Activated CD4-positive, alpha-beta memory T cell treated with anti-CD3 and anti-CD28 coated beads, Interleukin-2, amount 10 ng/mL, durations not matched to agents 7 days and 5 days (primary cell): ENCODE measurements at regions of chr15 and their contacts with region 1.

Region 1: DNA sequence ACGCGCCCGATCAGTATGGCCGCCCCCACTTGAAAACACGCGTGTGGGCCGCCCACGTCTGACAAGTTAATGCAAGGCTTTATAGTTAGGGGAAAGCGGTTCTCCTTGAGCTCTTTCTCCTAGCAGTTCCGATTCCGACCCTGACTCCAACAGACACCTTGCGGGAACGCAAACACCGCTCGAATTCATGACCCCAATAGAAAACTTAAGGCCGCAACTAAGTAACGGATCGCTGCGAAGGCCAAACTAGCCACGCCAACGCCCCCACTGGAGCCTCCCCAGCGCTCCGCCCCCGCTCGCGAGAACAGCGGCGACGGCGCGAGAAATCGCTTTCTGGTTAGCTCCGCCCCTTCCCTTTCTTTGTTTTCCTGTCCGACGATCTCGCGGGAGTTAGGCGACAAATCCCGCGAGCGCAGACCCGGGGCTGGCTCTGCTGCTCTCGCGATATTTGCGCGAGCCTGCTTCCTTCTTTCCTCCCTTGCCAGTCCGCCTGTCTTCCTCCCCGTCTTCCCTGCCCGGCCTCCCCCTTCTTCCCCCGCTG is at the start of gene IREB2:
- DNase-seq: peak; percentile 98
- H3K4me3 Mint-ChIP-seq: peak within 1 kb of the TSS; percentile 92
- H3K27ac Mint-ChIP-seq: peak within 1 kb of the TSS; percentile 89
- H3K4me1 Mint-ChIP-seq: peaks cover 48% of the 10 kb centered on the region
- H3K27me3 Mint-ChIP-seq: peaks cover under 1% of the 10 kb centered on the region
- total RNA-seq, gene IREB2: 57.8 to 61.5 TPM

Region 2: DNA sequence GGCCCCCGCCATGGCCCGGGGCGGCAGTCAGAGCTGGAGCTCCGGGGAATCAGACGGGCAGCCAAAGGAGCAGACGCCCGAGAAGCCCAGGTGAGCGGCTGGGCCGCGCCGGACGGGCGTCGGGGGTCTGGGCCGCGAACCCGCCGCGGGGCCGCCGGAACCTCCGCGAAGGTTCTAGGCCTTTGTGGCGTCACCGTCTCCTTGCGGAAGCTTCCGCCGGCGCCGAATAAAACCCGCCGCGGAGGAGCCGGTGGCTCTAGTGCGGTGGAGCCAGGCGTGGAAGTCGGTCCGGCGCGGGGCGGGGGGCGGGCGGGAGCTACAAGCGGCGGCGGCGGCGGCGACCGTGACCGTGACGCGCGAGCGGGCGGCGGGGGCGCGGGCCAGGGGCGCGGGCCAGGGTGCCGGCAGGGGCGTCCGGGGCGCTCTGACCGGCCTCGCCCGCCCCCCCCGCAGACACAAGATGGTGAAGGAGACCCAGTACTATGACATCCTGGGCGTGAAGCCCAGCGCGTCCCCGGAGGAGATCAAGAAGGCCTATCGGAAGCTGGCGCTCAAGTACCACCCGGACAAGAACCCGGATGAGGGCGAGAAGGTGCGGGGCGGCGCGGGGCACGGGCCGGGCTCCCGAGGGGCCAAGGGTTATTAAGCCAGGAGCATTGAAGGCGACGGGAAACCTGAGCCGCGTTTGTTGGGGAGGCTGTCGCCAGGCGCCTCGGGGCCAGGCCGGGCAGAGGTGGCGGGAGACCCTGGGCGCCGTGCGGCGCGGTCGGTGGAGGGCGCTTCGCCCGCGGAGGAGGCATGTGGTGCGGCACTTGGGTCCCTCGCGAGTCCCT is 173.3 kb before region 1 on chr15 and contains the start of gene DNAJA4:
- CTCF ChIA-PET with region 1: no interaction called
- POLR2A ChIA-PET with region 1: interaction called, 37 read pairs
- DNase-seq: peak; percentile 68
- H3K4me3 Mint-ChIP-seq: peak within 1 kb of the TSS; percentile 83
- H3K27ac Mint-ChIP-seq: peak within 1 kb of the TSS; percentile 71
- H3K4me1 Mint-ChIP-seq: peaks cover 29% of the 10 kb centered on the region
- H3K27me3 Mint-ChIP-seq: no peaks in the 10 kb centered on the region
- total RNA-seq, gene DNAJA4: 27.7 to 30.9 TPM

Region 3: DNA sequence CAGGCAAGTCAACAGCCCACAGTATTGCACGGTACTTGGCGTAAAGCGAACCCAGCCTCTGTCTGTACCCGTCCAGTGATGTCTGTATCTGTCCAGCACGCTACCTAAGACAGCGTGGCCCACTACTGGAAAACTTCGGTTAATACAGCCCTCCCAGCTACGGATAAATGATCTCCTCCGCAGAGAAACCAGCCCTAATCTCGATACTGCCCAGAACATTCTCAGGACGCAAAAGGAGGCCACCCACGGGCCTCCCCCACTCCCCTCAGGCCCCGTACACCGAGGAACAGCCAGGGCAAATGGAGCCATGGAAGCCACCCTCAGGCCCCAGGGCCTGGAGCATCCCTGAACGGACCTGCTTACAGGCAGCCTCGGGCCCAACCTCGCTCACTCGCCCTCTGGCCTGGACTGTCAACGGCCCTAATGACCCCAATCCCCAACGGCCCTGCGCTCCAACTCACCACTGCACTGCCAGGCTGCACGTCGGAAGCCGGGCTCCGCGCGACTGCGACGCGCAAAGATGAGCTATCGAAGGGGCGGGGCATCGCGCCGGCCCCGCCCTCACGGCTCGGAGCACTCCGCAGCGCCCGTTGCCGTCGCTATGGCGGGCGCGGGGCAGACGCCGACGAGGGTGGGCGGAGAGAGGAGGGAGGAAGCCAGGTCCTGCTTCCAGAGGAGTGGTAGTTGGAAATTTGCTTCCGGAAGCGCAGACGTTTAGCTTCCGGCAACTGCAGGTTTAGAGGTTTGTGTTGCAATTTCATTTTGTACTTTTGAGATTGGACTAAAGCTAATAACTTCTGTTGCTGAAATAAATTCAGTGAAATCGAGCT is 138.5 kb before region 1 on chr15 and contains the start of gene SKIC8:
- CTCF ChIA-PET with region 1: interaction called, 5 read pairs
- POLR2A ChIA-PET with region 1: interaction called, 31 read pairs
- DNase-seq: peak; percentile 92
- H3K4me3 Mint-ChIP-seq: peak within 1 kb of the TSS; percentile 96
- H3K27ac Mint-ChIP-seq: peak within 1 kb of the TSS; percentile 81
- H3K4me1 Mint-ChIP-seq: peaks cover 37% of the 10 kb centered on the region
- H3K27me3 Mint-ChIP-seq: no peaks in the 10 kb centered on the region
- total RNA-seq, gene SKIC8: 35.4 to 35.7 TPM

Region 4: GRCh38 chr15:78360426-78360825 is 77.4 kb before region 1 on chr15:
- CTCF ChIA-PET with region 1: no interaction called
- POLR2A ChIA-PET with region 1: no interaction called
- DNase-seq: no peak
- H3K4me3 Mint-ChIP-seq: no peak overlapping the region
- H3K27ac Mint-ChIP-seq: no peak overlapping the region
- H3K4me1 Mint-ChIP-seq: no peaks in the 10 kb centered on the region
- H3K27me3 Mint-ChIP-seq: peaks cover 20% of the 10 kb centered on the region

Region 5: GRCh38 chr15:78422571-78423340 is 15.1 kb before region 1 on chr15:
- CTCF ChIA-PET with region 1: interaction called, 20 read pairs
- POLR2A ChIA-PET with region 1: interaction called, 24 read pairs
- DNase-seq: peak; percentile 71
- H3K4me3 Mint-ChIP-seq: no peak overlapping the region
- H3K27ac Mint-ChIP-seq: no peak overlapping the region
- H3K4me1 Mint-ChIP-seq: peaks cover 16% of the 10 kb centered on the region
- H3K27me3 Mint-ChIP-seq: peaks cover 6% of the 10 kb centered on the region

Region 6: GRCh38 chr15:78449220-78449999 is 11.6 kb after region 1 on chr15:
- CTCF ChIA-PET with region 1: interaction called, 10 read pairs
- POLR2A ChIA-PET with region 1: interaction called, 37 read pairs
- DNase-seq: no peak
- H3K4me3 Mint-ChIP-seq: no peak overlapping the region
- H3K27ac Mint-ChIP-seq: no peak overlapping the region
- H3K4me1 Mint-ChIP-seq: peaks cover 30% of the 10 kb centered on the region
- H3K27me3 Mint-ChIP-seq: no peaks in the 10 kb centered on the region

Region 7: GRCh38 chr15:78461171-78461888 is 23.5 kb after region 1 on chr15:
- CTCF ChIA-PET with region 1: interaction called, 4 read pairs
- POLR2A ChIA-PET with region 1: interaction called, 18 read pairs
- DNase-seq: peak; percentile 28
- H3K4me3 Mint-ChIP-seq: no peak overlapping the region
- H3K27ac Mint-ChIP-seq: peak overlapping the region; percentile 53
- H3K4me1 Mint-ChIP-seq: peaks cover 27% of the 10 kb centered on the region
- H3K27me3 Mint-ChIP-seq: no peaks in the 10 kb centered on the region

Region 8: DNA sequence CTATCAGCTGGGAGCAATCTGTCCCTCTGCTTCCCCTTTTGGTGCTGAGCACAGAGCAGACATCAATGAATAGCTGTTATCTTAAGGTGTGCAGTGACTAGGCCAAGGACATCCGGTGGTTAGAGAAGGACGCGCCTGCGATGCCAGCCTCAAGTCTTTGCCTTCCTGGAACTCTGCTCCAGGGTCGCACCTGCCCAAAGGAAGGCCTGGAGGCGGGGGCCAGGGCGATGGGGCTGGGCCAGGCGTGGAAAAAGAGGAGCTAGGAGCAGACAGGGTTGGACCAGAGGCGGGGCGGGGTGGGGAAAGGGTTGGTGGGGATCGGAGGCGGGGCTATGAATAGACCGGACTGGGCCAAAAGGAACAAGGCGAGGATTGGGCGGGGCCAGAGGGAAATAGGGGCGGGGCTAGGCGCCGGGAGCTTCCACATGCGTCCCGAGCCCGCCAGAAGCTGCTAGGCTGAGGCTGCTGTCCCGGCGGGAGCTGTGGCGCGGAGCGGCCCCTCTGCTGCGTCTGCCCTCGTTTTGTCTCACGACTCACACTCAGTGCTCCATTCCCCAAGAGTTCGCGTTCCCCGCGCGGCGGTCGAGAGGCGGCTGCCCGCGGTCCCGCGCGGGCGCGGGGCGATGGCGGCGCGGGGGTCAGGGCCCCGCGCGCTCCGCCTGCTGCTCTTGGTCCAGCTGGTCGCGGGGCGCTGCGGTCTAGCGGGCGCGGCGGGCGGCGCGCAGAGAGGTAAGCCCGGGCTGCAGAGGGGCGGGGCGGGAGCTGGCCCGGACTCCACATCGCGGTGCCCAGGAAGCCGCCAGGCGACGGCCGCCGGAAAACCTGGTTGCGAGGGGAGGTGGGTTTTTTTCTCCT is 127.5 kb after region 1 on chr15 and contains the start of gene CHRNA5:
- CTCF ChIA-PET with region 1: no interaction called
- POLR2A ChIA-PET with region 1: interaction called, 16 read pairs
- DNase-seq: peak; percentile 51
- H3K4me3 Mint-ChIP-seq: peak within 1 kb of the TSS; percentile 81
- H3K27ac Mint-ChIP-seq: peak within 1 kb of the TSS; percentile 45
- H3K4me1 Mint-ChIP-seq: peaks cover 27% of the 10 kb centered on the region
- H3K27me3 Mint-ChIP-seq: peaks cover 19% of the 10 kb centered on the region
- total RNA-seq, gene CHRNA5: 2.1 to 3.1 TPM

Region 9: GRCh38 chr15:79084308-79084968 is 646.6 kb after region 1 on chr15:
- CTCF ChIA-PET with region 1: no interaction called
- POLR2A ChIA-PET with region 1: no interaction called
- DNase-seq: no peak
- H3K4me3 Mint-ChIP-seq: no peak overlapping the region
- H3K27ac Mint-ChIP-seq: no peak overlapping the region
- H3K4me1 Mint-ChIP-seq: no peaks in the 10 kb centered on the region
- H3K27me3 Mint-ChIP-seq: peaks cover 39% of the 10 kb centered on the region